ENCODE measurements at regions of chr9 and their contacts with region 1.

Region 1: DNA sequence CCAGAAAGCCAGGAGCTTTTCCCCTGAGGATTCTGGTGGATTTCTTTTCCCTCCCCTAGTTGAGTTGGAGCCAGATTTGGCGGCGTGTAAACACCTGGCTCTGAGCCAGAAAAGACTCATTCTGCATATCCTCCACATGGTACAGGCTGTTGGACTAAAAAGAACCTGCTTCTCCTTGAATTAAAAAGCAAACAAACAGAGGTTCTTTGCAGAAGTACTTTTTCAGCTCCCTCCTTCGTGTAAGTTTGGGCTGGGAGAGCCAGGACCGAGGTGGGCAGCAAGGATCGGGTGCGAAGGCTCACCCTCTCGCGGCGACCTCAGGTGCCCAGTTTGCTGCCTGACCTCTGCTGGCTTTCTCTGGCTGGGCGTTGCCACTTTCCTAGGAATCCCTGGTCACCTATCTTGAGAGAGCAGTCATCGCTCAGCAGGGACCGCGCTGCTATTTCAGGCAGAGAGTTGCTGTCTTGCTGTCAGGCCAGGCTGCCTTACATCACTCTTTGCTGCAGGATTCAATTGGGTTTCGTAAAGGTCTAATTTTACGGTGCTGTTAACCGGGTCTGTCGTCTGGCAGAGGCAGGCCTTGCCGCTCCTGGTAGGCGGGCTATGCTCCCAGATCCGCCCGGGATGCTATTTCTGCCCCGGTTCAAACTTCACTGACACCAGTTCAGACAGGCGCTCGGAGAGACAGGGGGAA is 3.2 kb downstream of the PAPPA start:
- DNase-seq: peak; percentile 70 to 73
- H3K4me3 ChIP-seq: peak overlapping the region; percentile 48
- H3K27ac ChIP-seq: peak overlapping the region; percentile 56
- H3K4me1 ChIP-seq: peaks cover 38% of the 10 kb centered on the region
- H3K27me3 ChIP-seq: no peaks in the 10 kb centered on the region
- CTCF ChIP-seq: no peak

Region 2: DNA sequence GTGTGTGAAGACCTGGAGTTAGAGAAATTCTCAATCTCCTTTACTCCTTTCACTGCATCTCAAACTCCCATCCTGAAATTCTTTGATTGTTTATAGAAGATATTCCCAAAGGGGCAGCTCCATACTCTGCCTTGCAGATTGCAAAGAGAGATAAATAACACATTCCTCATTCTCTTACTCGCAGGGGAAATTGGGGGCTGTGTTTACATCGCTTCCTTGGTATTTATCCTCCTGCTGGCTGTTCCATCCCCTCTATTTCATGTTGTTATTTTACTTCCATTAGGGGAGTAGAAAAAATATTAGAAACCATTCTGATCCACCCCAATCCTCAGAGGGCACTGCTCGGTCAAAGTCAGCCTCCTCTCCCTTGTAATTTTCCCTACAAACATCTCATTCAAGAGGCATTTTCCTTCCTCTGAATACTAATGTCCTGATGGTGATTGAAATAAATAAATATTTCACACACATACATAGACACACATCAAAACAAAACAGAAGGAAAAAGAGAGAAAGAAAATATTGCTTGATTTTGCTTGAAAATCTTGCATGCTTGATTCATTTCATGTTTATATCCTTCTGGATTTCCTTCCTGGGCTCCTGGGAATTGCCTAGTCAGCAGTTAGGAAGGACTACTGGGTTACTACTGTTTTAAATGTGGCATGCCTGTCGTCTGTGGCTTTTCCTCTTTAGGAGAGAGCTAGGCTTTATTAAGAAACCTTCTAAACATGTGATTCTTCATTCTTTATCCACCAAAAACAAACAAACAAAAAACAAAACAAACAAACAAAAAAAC is 423.3 kb before region 1 on chr9:
- CTCF ChIA-PET with region 1: interaction called, 14 read pairs
- POLR2A ChIA-PET with region 1: no interaction called
- intact Hi-C with region 1: no loop called
- DNase-seq: no peak
- H3K4me3 ChIP-seq: no peak overlapping the region
- H3K27ac ChIP-seq: no peak overlapping the region
- H3K4me1 ChIP-seq: no peaks in the 10 kb centered on the region
- H3K27me3 ChIP-seq: no peaks in the 10 kb centered on the region
- CTCF ChIP-seq: no peak

Region 3: GRCh38 chr9:116096853-116097252 is 59.9 kb before region 1 on chr9:
- CTCF ChIA-PET with region 1: no interaction called
- POLR2A ChIA-PET with region 1: no interaction called
- intact Hi-C with region 1: loop called (anchors 2 kb)
- DNase-seq: peak in 1 of 2 experiments; percentile 15
- H3K4me3 ChIP-seq: no peak overlapping the region
- H3K27ac ChIP-seq: no peak overlapping the region
- H3K4me1 ChIP-seq: peaks cover 13% of the 10 kb centered on the region
- H3K27me3 ChIP-seq: no peaks in the 10 kb centered on the region
- CTCF ChIP-seq: no peak

Measured in PC-9 (cell line).